CD4-positive, alpha-beta T cell (primary cell): ENCODE measurements at regions of chr11 and their contacts with region 1.

Region 1: DNA sequence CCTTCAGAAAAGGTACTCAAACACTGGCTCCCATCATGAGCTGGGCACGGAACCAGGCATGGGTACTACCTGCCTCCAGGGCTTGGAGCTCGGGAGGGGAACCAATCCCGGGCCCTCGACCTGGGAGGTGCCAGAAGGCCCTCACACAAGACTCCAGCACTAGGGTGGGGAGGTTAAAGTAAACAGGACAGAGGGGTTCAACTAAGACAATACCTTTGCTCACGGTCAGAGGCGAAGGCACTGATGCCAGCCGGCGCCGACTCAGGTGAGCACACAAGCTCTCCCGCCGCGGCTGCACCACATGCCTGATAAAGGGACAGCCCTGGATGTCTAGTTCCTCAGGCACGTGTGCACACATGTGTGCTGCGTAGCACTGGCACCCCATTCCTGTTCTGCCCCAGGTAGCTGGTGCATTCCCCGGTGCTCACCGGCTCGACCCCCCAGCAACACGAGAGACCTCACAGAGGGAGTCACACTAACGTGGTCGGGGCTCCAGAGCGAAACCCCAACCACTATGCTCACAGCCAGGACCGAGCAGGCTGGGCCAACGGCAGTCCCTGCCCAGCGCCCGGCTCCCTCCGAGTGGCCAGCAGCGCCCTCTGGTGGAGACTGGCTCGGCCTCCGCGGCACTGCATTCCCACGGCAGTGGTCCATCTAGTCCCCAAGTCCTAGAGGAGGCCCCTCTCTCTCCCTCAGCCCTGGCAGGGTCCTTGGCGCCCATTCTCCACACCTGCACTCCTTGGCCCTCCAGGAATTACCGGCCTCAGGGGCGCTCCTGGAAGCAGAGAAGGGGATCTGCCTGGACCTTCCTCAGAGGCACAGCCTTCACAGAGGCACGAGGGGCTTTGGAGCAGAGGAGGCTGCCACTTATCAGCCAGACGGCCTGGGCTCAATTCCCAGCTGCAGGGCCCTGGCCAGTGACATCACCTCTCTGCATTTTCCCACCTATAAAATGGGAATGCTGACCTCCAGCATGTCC is 28.8 kb upstream of the MOB2 start:
- DNase-seq: peak; percentile 55 to 83 (median 68)
- ATAC-seq: peak; percentile 80
- H3K4me3 ChIP-seq: no peak overlapping the region
- H3K4me3 Mint-ChIP-seq: peak overlapping the region; percentile 42
- H3K27ac ChIP-seq: no peak overlapping the region
- H3K27ac Mint-ChIP-seq: peak overlapping the region; percentile 29
- H3K4me1 ChIP-seq: peaks cover 70% of the 10 kb centered on the region
- H3K4me1 Mint-ChIP-seq: peaks cover 66% of the 10 kb centered on the region
- H3K27me3 ChIP-seq: no peaks in the 10 kb centered on the region
- H3K27me3 Mint-ChIP-seq: no peaks in the 10 kb centered on the region
- CTCF ChIP-seq: peak; percentile 84

Region 2: DNA sequence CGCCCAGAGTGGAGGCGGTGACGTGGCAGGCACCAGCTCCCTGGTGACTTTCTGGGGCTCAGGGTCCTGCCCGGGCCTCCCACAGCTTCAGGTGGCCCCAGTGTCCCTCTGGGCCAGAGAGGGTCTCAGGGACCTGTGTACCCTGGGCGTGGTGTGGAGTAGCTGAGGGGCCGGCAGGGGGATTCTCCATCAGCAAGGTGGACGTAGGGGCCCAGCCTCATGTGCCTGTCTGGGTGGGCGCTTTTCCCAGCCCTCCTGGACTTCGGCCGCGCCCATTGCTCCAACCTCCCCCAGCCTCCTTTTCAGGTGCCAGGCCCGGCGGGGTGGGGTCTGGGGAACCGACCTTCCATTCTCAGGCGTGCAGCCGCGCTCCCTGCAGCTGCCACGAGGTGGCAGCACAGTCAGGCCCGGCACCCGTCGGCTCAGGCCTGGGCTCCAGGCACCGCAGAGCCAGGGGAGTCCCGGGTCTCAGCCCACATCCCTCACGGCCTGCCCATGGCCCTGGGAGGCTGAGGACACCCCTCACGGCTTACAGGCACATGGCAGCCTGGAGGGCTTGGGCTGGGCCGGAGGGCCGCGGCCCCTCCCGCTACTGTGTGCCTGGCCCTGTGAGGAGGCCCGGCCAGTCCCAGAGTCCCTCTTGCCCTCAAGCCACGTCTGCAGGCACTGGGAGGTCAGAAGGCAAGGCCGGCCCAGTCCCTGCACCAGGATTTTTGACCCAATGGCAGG is 312.4 kb before region 1 on chr11:
- CTCF ChIA-PET with region 1: interaction called, 6 read pairs
- POLR2A ChIA-PET with region 1: no interaction called
- intact Hi-C with region 1: loop called (anchors 1 kb)
- DNase-seq: peak; percentile 39 to 81 (median 57)
- ATAC-seq: peak; percentile 88
- H3K4me3 ChIP-seq: no peak overlapping the region
- H3K4me3 Mint-ChIP-seq: no peak overlapping the region
- H3K27ac ChIP-seq: no peak overlapping the region
- H3K27ac Mint-ChIP-seq: no peak overlapping the region
- H3K4me1 ChIP-seq: peaks cover 8% of the 10 kb centered on the region
- H3K4me1 Mint-ChIP-seq: no peaks in the 10 kb centered on the region
- H3K27me3 ChIP-seq: peaks cover 0 to 3% of the 10 kb centered on the region in 2 experiments
- H3K27me3 Mint-ChIP-seq: no peaks in the 10 kb centered on the region
- CTCF ChIP-seq: peak; percentile 84

Region 3: GRCh38 chr11:1453611-1454034 is 61.7 kb before region 1 on chr11:
- CTCF ChIA-PET with region 1: no interaction called
- POLR2A ChIA-PET with region 1: no interaction called
- intact Hi-C with region 1: loop called in 1 of 2 experiments (anchors 2 kb)
- DNase-seq: peak in 7 of 14 experiments; percentile 18 to 71 (median 49)
- ATAC-seq: peak; percentile 99
- H3K4me3 ChIP-seq: no peak overlapping the region
- H3K4me3 Mint-ChIP-seq: no peak overlapping the region
- H3K27ac ChIP-seq: no peak overlapping the region
- H3K27ac Mint-ChIP-seq: no peak overlapping the region
- H3K4me1 ChIP-seq: peaks cover 15% of the 10 kb centered on the region
- H3K4me1 Mint-ChIP-seq: no peaks in the 10 kb centered on the region
- H3K27me3 ChIP-seq: no peaks in the 10 kb centered on the region
- H3K27me3 Mint-ChIP-seq: no peaks in the 10 kb centered on the region
- CTCF ChIP-seq: peak; percentile 61

Region 4: GRCh38 chr11:1482581-1483444 is 32.6 kb before region 1 on chr11:
- CTCF ChIA-PET with region 1: no interaction called
- POLR2A ChIA-PET with region 1: no interaction called
- intact Hi-C with region 1: no loop called
- DNase-seq: no peak
- ATAC-seq: no peak
- H3K4me3 ChIP-seq: no peak overlapping the region
- H3K4me3 Mint-ChIP-seq: no peak overlapping the region
- H3K27ac ChIP-seq: no peak overlapping the region
- H3K27ac Mint-ChIP-seq: no peak overlapping the region
- H3K4me1 ChIP-seq: peaks cover 29% of the 10 kb centered on the region
- H3K4me1 Mint-ChIP-seq: peaks cover 5% of the 10 kb centered on the region
- H3K27me3 ChIP-seq: no peaks in the 10 kb centered on the region
- H3K27me3 Mint-ChIP-seq: no peaks in the 10 kb centered on the region
- CTCF ChIP-seq: no peak

Region 5: DNA sequence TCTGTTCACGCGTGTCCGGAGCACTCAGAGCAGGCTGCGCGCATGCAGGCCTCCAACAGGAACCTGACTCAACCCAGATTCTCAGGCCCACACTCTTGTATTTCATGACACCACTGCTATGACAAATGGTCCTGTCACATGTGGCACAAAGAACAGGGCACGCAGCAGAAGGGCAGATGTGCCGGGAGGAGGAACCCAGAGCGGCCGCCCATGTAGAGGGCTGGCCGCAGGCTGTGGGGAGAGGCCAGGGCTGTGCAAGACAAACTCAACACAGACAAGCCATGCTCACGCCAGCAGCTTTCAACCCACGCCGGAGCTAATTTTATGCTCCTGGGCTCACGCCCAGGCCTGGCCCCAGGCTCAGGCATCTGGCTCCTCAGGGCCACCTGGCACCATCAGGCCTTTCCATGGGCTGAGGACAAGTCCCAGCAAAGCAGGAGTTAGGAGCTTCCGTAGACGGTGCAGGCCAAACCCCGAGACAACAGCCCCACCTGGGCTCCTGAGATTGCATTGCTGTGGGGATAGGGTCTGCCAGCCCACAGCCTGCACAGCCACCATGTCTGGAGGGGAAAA is 16.7 kb after region 1 on chr11:
- CTCF ChIA-PET with region 1: no interaction called
- POLR2A ChIA-PET with region 1: no interaction called
- intact Hi-C with region 1: no loop called
- DNase-seq: no peak
- ATAC-seq: no peak
- H3K4me3 ChIP-seq: no peak overlapping the region
- H3K4me3 Mint-ChIP-seq: no peak overlapping the region
- H3K27ac ChIP-seq: no peak overlapping the region
- H3K27ac Mint-ChIP-seq: no peak overlapping the region
- H3K4me1 ChIP-seq: peaks cover 84% of the 10 kb centered on the region
- H3K4me1 Mint-ChIP-seq: peaks cover 35% of the 10 kb centered on the region
- H3K27me3 ChIP-seq: no peaks in the 10 kb centered on the region
- H3K27me3 Mint-ChIP-seq: no peaks in the 10 kb centered on the region
- CTCF ChIP-seq: no peak

Region 6: DNA sequence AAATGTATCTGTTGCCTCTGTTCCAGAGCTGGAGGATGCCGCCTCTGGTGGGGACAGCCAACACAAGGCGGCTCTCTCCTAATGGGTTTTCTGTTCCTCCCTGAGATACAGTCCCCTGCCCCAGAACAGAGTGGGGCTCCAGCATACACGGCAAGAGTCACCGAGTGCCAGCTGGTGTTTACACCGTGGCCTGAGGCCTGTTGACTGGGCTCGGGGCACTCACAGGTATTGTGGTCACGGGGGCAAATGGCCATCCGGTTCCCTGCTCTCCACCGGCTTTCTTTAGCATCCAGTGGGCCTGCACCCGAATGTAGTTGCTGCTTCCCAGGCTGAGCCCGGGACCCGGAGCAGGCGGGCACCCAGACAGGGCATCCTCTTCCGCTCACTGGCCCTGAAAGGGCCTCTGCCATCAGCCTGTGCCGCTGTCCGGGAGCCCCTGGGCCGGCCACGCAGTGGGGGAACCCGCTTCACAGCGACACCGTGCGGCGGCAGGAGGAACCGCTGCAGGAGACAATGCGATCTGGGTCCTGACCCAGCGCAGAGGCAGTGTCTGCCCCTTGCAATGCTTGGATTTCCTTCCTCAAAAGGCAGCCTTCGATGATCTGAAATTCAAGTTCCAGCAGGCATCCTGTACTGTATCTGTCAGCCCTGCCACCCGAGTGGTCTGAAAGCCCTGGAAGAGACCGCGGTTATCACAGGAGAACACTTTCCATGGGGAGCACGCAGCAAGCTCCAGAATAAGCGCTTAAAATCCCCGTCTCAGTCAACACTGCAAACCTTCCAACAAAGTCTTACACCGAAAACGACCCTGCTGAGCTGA is 113.3 kb after region 1 on chr11:
- CTCF ChIA-PET with region 1: no interaction called
- POLR2A ChIA-PET with region 1: no interaction called
- intact Hi-C with region 1: no loop called
- DNase-seq: peak; percentile 26 to 78 (median 56)
- ATAC-seq: peak; percentile 97
- H3K4me3 ChIP-seq: no peak overlapping the region
- H3K4me3 Mint-ChIP-seq: no peak overlapping the region
- H3K27ac ChIP-seq: no peak overlapping the region
- H3K27ac Mint-ChIP-seq: no peak overlapping the region
- H3K4me1 ChIP-seq: peaks cover 10% of the 10 kb centered on the region
- H3K4me1 Mint-ChIP-seq: peaks cover 10% of the 10 kb centered on the region
- H3K27me3 ChIP-seq: peaks cover 12% of the 10 kb centered on the region in 2 experiments
- H3K27me3 Mint-ChIP-seq: peaks cover 40% of the 10 kb centered on the region
- CTCF ChIP-seq: peak; percentile 84